ENCODE measurements at regions of chr13 and their contacts with region 1.

Region 1: GRCh38 chr13:85632526-85633195 is 166.6 kb downstream of the SLITRK6 start:
- DNase-seq: no peak

Region 2: GRCh38 chr13:85806553-85807175 is 174.0 kb after region 1 on chr13:
- intact Hi-C with region 1: no loop called
- DNase-seq: no peak

Region 3: DNA sequence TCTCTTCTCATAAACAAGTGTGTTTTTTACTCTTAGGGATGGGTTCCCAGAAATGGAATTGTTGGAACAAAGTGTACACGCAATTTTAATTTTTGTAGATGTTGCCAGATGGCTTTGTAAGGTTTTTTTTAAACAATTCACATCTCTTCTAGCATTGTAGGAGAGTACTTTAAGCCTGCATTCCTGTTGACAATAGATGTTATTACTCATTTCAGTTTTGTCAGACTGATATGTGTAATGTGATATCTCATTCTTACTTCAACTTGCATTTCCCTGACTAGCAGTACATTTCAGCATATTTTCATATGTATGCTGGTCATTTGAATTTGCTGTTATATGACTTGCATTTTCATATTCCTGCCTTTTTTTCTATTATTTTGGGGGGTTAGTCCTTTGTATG is 353.1 kb after region 1 on chr13:
- intact Hi-C with region 1: loop called in 1 of 2 experiments (anchors 10 kb)
- DNase-seq: no peak

Region 4: GRCh38 chr13:87554045-87554444 is 1921.4 kb after region 1 on chr13:
- intact Hi-C with region 1: no loop called
- DNase-seq: no peak

Measured in posterior vena cava (tissue), 2 donors.